ENCODE measurements at regions of chr10 and their contacts with region 1.

Region 1: DNA sequence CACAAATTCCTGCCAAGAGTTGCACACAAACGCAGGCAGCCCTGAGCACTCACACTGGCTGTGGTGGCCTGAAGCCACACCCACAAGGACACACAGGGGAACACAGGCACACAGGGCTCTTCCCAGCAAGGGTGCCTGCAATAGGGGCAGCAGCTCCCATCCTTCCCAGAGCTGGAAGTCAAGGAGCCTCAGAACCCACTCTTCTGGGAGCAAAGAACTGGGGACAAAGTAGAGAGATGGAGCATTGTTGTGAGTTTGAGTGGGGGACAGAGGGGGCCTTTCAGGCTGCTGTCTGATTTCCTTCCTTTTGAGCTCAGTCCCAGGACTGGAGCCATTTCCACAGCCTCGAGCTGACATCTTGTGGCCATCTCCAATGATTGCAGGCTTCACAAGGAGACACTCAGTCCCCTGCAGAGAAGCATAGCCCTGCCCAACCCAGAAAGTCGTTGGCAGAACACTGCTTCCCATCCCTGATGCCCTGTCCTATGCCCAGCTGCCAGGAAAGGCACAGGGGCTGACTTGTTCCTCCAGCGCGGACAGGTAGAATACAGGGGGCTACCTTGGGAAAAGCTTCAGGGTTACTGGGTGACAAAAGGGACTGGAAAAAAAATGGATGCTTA is 34.4 kb upstream of the SLF2 start:
- DNase-seq: peak in 4 of 5 donors; percentile 36 to 60 (median 42)
- ATAC-seq: peak; percentile 72 to 90 (median 82)
- H3K4me3 ChIP-seq: no peak overlapping the region
- H3K27ac ChIP-seq: no peak overlapping the region
- H3K4me1 ChIP-seq: peaks cover 0 to 17% (median 0%) of the 10 kb centered on the region in 12 donors
- H3K27me3 ChIP-seq: peaks cover 0 to 39% (median 11%) of the 10 kb centered on the region in 9 donors
- CTCF ChIP-seq: peak; percentile 39 to 66 (median 57)
- POLR2A ChIP-seq: no peak

Region 2: GRCh38 chr10:100433253-100434240 is 444.9 kb before region 1 on chr10:
- intact Hi-C with region 1: loop called in 7 of 10 experiments (anchors 5 to 10 kb)
- DNase-seq: peak; percentile 83 to 89 (median 88)
- ATAC-seq: peak; percentile 58 to 92 (median 91)
- H3K4me3 ChIP-seq: no peak overlapping the region
- H3K27ac ChIP-seq: no peak overlapping the region
- H3K4me1 ChIP-seq: no peaks in the 10 kb centered on the region
- H3K27me3 ChIP-seq: no peaks in the 10 kb centered on the region
- CTCF ChIP-seq: peak; percentile 95 to 100 (median 99)
- POLR2A ChIP-seq: no peak

Region 3: GRCh38 chr10:100562008-100562711 is 316.2 kb before region 1 on chr10:
- intact Hi-C with region 1: loop called in 9 of 10 experiments (anchors 1 to 10 kb)
- DNase-seq: peak; percentile 36 to 78 (median 50)
- ATAC-seq: peak; percentile 73 to 86 (median 85)
- H3K4me3 ChIP-seq: peak overlapping the region in 6 of 12 donors; percentile 3 to 30 (median 7)
- H3K27ac ChIP-seq: no peak overlapping the region
- H3K4me1 ChIP-seq: peaks cover 0 to 15% (median 10%) of the 10 kb centered on the region in 12 donors
- H3K27me3 ChIP-seq: peaks cover 6 to 57% (median 43%) of the 10 kb centered on the region in 9 donors
- CTCF ChIP-seq: peak; percentile 47 to 78 (median 70)
- POLR2A ChIP-seq: no peak

Region 4: GRCh38 chr10:100670828-100671479 is 207.4 kb before region 1 on chr10:
- intact Hi-C with region 1: loop called in 4 of 10 experiments (anchors 5 to 10 kb)
- DNase-seq: no peak
- ATAC-seq: peak in 1 of 4 donors; percentile 52
- H3K4me3 ChIP-seq: no peak overlapping the region
- H3K27ac ChIP-seq: no peak overlapping the region
- H3K4me1 ChIP-seq: peaks cover 0 to 6% (median 0%) of the 10 kb centered on the region in 12 donors
- H3K27me3 ChIP-seq: peaks cover 30 to 95% (median 64%) of the 10 kb centered on the region in 9 donors
- CTCF ChIP-seq: peak; percentile 28 to 68 (median 57)
- POLR2A ChIP-seq: no peak